ENCODE measurements at regions of chr17 and their contacts with region 1.

Region 1: DNA sequence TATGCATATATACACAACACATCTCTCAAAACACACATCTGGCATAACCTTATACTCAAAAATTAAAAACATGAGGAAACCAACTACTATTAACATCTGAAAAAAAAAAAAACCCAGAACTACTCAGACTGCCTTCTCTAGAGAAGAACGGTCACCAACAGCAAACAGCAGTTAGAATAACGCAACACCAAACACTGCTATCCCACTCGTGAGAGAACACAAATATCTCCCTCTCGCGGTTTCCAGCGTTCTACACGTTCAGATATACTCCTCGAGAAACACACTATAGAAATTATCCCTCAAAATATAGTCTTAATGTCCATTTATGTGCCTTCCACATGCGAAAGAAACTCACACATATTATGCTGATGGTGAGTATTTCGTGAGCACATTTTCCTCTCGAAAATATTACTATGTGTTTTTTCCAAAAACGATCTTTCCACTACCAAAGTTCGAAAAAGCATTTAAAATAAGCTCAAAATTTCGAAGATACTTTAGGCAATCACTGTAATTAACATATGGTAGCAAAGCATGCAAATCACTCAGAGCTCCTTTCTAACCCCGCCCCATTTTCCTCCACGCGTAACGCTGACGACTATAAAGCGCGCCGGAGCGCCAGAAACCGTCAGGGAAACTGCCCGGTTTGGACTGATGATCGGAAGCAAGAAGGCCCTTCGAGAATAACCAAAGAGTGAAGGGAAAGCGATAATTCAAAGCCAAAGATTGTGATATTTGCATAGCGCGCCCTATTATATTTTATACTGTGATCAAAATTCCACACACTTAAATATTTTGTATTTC is 60.1 kb downstream of the TEX14 start:
- DNase-seq: peak; percentile 89

Region 2: DNA sequence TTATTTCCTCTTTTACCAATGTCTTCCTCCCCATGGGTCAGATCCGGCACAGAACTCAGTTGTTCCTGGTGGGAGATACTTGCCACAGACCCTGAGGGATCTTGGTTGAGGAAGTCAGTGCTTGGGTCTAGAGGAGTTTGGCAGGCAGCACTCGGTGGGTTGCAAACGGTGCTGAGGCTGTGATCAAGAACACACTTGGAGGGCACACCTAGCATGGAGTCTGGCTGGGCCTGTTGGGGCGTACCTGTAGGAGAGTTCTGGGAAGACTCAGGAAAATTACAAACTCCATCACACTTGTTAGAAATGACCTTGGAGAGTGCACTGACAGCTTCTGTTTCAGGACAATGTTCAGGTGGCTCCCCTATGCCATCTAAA is 136.2 kb before region 1 on chr17:
- CTCF ChIA-PET with region 1: no interaction called
- POLR2A ChIA-PET with region 1: no interaction called
- DNase-seq: no peak

Region 3: DNA sequence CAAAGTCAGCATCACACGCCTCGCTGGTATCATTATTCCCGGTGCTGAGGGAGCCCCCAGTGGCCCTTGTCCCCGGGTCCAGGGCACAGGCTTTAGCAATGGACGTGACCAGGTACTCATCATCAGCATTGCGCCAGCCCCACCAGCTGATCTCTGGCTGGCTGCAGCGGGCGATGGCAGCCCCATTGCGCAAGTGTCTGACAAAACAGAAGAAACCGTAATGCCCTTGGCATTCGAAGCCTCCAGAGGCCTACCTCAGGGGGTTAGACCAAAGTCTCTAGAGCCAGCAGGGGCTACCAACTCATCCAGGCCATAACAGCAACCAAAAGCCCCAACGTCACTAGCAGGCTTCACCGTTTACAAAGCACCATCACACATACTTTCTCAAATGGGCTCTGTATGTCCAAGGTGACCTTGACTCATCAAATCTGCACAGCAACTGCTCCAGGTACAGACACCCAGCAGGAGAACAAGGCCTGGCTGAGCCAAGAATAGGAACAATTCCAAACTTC is 124.5 kb before region 1 on chr17:
- CTCF ChIA-PET with region 1: no interaction called
- POLR2A ChIA-PET with region 1: no interaction called
- DNase-seq: no peak

Region 4: GRCh38 chr17:58577642-58578091 is 54.1 kb before region 1 on chr17:
- CTCF ChIA-PET with region 1: interaction called, 3 read pairs
- POLR2A ChIA-PET with region 1: interaction called, 30 read pairs
- DNase-seq: peak; percentile 65

Region 5: DNA sequence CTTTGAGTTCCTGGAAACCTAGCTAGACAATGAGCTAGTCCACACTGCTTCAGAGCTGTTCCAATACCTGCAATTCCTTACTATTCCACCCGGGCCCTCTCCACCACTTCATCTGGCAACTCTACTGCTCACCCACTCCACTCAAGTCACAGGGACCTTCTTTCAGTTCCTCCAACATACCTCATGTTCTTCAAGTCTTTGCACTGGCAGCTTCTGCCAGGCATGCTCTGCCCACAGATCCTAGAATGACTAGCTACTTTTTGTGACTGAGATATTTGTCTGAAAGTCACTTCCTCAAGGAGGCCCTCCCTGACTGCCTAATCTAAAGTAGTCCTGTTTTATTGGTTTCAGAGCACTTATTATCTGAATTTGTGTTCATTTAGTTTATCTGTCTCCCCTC is 26.3 kb before region 1 on chr17:
- CTCF ChIA-PET with region 1: interaction called, 3 read pairs
- POLR2A ChIA-PET with region 1: interaction called, 35 read pairs
- DNase-seq: peak; percentile 11

Region 6: GRCh38 chr17:58643140-58643539 is 11.4 kb after region 1 on chr17:
- CTCF ChIA-PET with region 1: no interaction called
- POLR2A ChIA-PET with region 1: interaction called, 50 read pairs
- DNase-seq: no peak

Region 7: GRCh38 chr17:58679263-58680037 is 47.7 kb after region 1 on chr17:
- CTCF ChIA-PET with region 1: no interaction called
- POLR2A ChIA-PET with region 1: interaction called, 30 read pairs
- DNase-seq: peak; percentile 71

Region 8: GRCh38 chr17:58706336-58707140 is 74.8 kb after region 1 on chr17:
- CTCF ChIA-PET with region 1: no interaction called
- POLR2A ChIA-PET with region 1: interaction called, 10 read pairs
- DNase-seq: no peak

Region 9: GRCh38 chr17:58728786-58729185 is 97.1 kb after region 1 on chr17:
- CTCF ChIA-PET with region 1: no interaction called
- POLR2A ChIA-PET with region 1: no interaction called
- DNase-seq: no peak

Region 10: DNA sequence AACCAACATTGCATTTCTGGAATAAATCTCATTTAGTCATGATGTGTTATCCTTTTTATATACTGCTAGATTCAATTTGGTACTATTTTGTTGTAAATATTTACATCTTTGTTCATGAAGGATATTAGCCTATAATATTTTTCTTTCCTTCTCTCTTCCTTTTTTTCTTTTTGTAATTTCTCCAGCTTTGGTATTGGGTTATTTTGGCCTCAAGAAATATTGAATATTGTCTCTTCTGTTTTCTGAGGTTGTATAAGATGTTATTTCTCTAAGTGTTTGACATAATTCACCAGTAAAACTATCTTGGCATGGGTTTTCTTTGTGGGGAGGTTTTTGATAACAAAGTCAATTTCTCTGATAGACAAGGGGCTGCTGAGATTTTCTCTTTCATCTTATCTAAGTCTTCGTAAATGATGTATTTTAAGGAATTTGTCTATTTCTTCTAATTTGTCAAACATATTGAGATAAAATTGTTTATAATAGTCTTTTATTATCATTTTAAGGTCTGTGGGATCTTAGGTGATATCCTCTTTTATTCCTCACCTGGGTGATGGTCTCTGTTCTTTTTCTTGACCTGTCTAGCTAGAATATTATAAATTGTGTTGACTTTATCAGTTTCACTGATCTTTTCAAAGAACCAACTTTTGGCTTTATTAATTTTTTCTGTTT is 168.7 kb after region 1 on chr17:
- CTCF ChIA-PET with region 1: no interaction called
- POLR2A ChIA-PET with region 1: no interaction called
- DNase-seq: no peak

Measured in HEK293T (cell line).